ENCODE measurements at regions of chr1 and their contacts with region 1.

Region 1: DNA sequence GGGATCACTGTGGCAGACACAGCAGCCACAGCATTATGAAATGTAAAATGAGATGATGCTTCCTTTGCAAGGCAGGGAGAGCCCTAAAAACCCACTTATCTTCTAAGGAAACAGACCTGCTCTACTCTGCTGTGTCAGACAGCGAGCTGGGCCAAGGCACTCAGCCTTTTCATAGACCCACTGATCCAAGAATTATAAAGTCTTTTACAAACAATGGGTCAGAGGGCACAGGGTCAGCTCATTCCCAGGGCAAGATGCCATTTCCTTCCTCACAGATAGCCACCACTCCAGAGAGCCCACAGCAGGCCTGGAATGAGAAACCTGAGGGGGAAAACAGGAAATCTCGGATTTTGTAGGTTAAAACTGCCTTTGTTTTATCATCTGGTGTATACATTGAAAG is 42.9 kb downstream of the CASQ2 start:
- DNase-seq: no peak
- ATAC-seq: no peak
- H3K4me3 ChIP-seq: no peak overlapping the region
- H3K27ac ChIP-seq: no peak overlapping the region
- H3K4me1 ChIP-seq: no peaks in the 10 kb centered on the region
- H3K27me3 ChIP-seq: no peaks in the 10 kb centered on the region
- CTCF ChIP-seq: no peak

Region 2: GRCh38 chr1:115630342-115630741 is 95.3 kb before region 1 on chr1:
- CTCF ChIA-PET with region 1: no interaction called
- POLR2A ChIA-PET with region 1: no interaction called
- in situ Hi-C with region 1: no loop called
- intact Hi-C with region 1: no loop called
- DNase-seq: no peak
- ATAC-seq: no peak
- H3K4me3 ChIP-seq: no peak overlapping the region
- H3K27ac ChIP-seq: no peak overlapping the region
- H3K4me1 ChIP-seq: no peaks in the 10 kb centered on the region
- H3K27me3 ChIP-seq: no peaks in the 10 kb centered on the region
- CTCF ChIP-seq: no peak

Region 3: DNA sequence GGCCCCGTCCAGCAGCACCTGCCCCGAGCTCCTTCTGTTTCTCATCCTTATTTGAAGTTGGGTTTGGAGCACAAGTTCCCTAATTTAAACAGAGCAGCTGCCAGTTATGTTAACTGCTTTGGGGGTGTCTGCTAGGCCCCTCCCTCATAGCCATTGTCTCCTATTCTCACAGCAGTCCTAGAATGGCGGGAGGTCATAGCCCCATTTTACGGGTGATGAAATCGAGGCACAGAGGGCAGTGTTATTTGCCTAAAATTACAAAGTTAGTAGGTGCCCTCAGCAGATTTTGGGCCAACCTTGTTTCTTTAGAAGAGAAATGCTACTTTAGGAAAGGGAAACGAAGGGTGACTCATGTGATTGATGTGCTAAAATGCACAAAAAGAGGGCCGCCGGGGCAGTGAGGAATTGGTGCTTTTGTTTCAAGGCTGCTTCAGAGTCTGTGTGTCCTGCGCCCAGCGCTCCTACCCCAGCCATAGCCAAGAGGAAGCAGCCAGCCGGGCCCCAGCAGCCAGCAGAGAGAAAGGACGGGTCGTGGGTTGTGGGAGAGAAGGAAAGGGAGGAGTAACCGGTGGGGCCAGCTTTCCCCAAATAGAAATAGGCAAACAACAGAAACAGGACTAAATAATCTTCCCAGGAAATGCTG is 70.8 kb before region 1 on chr1:
- CTCF ChIA-PET with region 1: no interaction called
- POLR2A ChIA-PET with region 1: no interaction called
- in situ Hi-C with region 1: no loop called
- intact Hi-C with region 1: no loop called
- DNase-seq: no peak
- ATAC-seq: no peak
- H3K4me3 ChIP-seq: no peak overlapping the region
- H3K27ac ChIP-seq: no peak overlapping the region
- H3K4me1 ChIP-seq: peaks cover 4% of the 10 kb centered on the region
- H3K27me3 ChIP-seq: no peaks in the 10 kb centered on the region
- CTCF ChIP-seq: no peak

Region 4: DNA sequence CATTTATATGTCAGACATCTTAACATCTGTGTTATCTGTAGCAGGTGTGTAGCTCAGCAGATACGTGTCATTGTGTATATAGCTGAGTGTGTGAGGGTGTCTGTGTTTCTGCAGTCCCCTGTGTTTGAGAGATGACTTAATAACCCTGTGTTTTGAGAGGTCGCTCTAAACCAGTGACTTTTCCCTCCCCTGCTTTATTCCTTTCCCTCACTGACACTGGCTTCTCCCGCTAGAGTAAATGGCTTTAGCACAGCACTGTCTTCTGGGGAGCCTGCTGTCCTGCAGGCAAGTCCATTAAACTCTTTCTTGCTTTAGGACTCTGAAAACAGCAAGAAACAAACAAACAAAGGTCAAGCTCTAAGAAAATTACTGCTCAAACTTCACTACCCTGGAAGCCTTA is 30.8 kb before region 1 on chr1:
- CTCF ChIA-PET with region 1: no interaction called
- POLR2A ChIA-PET with region 1: no interaction called
- in situ Hi-C with region 1: no loop called
- intact Hi-C with region 1: no loop called
- DNase-seq: no peak
- ATAC-seq: no peak
- H3K4me3 ChIP-seq: no peak overlapping the region
- H3K27ac ChIP-seq: no peak overlapping the region
- H3K4me1 ChIP-seq: no peaks in the 10 kb centered on the region
- H3K27me3 ChIP-seq: no peaks in the 10 kb centered on the region
- CTCF ChIP-seq: no peak

Region 5: GRCh38 chr1:115933625-115934024 is 208.0 kb after region 1 on chr1:
- CTCF ChIA-PET with region 1: no interaction called
- POLR2A ChIA-PET with region 1: interaction called, 10 read pairs
- in situ Hi-C with region 1: no loop called
- intact Hi-C with region 1: no loop called
- DNase-seq: no peak
- ATAC-seq: no peak
- H3K4me3 ChIP-seq: no peak overlapping the region
- H3K27ac ChIP-seq: no peak overlapping the region
- H3K4me1 ChIP-seq: no peaks in the 10 kb centered on the region
- H3K27me3 ChIP-seq: no peaks in the 10 kb centered on the region
- CTCF ChIP-seq: no peak

Measured in Panc1 (cell line).